CD8-positive, alpha-beta T cell (primary cell): ENCODE measurements at regions of chr6 and their contacts with region 1.

Region 1: GRCh38 chr6:37819177-37819823 is at the start of gene ZFAND3:
- DNase-seq: peak; percentile 83 to 97 (median 92)
- ATAC-seq: peak; percentile 81
- H3K4me3 ChIP-seq: peak within 1 kb of the TSS; percentile 73 to 92
- H3K4me3 Mint-ChIP-seq: peak within 1 kb of the TSS; percentile 96
- H3K27ac ChIP-seq: peak within 1 kb of the TSS; percentile 93 to 98
- H3K27ac Mint-ChIP-seq: peak within 1 kb of the TSS; percentile 98
- H3K4me1 ChIP-seq: peaks cover 39% of the 10 kb centered on the region
- H3K4me1 Mint-ChIP-seq: peaks cover 59% of the 10 kb centered on the region
- H3K27me3 ChIP-seq: no peaks in the 10 kb centered on the region
- H3K27me3 Mint-ChIP-seq: no peaks in the 10 kb centered on the region
- CTCF ChIP-seq: no peak
- total RNA-seq, gene ZFAND3: 28.4 to 29.9 TPM

Region 2: DNA sequence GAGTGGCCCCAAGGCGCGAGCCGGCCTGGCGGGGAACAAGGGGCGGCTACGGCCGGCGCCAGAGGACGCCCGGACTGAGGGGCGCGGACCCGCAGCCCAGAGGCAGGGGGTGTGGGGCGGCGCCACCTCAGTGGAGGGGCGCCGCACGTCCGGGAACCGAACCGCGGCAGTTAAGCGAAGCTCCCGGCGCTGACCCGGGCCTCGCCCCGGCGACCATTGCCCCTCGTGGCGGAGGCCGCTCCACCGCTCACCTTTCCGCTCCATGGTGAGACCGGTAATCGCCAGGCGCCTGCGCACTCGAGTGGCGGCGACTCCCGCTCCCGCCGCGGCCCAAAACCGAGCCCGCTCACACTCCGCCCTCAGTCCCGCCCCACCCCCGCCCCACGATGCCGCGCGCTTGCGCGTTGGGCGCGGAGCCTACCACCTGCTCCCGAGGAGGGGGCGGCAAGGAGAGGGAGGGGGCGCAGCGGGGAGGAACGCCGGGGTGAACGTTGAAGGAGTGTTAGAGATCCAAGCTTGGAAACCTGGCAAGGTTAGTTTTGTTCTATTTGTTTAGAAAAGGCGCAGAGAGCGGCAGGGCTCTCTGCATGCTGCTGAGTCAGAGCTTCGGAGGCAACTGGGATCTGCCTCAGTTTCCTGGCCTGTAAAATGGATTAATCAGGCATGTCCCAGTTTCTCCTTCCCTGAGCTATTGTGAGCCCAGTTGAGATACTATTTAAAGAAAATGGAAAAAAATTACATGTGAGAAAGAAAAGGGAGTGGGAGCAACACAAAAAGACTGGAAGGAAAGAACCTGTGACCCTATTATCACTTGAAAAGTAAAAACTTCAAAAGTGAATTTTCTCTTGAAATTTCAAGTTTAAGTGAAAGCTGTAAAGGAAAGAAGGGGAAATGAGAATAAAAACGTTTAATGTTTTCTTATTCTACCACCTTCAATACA is 1898.2 kb before region 1 on chr6 and contains the start of gene SRPK1:
- CTCF ChIA-PET with region 1: no interaction called
- POLR2A ChIA-PET with region 1: no interaction called
- intact Hi-C with region 1: loop called in 1 of 2 experiments (anchors 5 kb)
- DNase-seq: peak; percentile 66 to 90 (median 81)
- ATAC-seq: peak; percentile 76
- H3K4me3 ChIP-seq: peak within 1 kb of the TSS; percentile 63 to 67
- H3K4me3 Mint-ChIP-seq: peak within 1 kb of the TSS; percentile 96
- H3K27ac ChIP-seq: peak within 1 kb of the TSS; percentile 42 to 62
- H3K27ac Mint-ChIP-seq: peak within 1 kb of the TSS; percentile 93
- H3K4me1 ChIP-seq: peaks cover 19% of the 10 kb centered on the region
- H3K4me1 Mint-ChIP-seq: peaks cover 41% of the 10 kb centered on the region
- H3K27me3 ChIP-seq: no peaks in the 10 kb centered on the region
- H3K27me3 Mint-ChIP-seq: no peaks in the 10 kb centered on the region
- CTCF ChIP-seq: no peak
- total RNA-seq, gene SRPK1: 21.0 to 22.7 TPM

Region 3: DNA sequence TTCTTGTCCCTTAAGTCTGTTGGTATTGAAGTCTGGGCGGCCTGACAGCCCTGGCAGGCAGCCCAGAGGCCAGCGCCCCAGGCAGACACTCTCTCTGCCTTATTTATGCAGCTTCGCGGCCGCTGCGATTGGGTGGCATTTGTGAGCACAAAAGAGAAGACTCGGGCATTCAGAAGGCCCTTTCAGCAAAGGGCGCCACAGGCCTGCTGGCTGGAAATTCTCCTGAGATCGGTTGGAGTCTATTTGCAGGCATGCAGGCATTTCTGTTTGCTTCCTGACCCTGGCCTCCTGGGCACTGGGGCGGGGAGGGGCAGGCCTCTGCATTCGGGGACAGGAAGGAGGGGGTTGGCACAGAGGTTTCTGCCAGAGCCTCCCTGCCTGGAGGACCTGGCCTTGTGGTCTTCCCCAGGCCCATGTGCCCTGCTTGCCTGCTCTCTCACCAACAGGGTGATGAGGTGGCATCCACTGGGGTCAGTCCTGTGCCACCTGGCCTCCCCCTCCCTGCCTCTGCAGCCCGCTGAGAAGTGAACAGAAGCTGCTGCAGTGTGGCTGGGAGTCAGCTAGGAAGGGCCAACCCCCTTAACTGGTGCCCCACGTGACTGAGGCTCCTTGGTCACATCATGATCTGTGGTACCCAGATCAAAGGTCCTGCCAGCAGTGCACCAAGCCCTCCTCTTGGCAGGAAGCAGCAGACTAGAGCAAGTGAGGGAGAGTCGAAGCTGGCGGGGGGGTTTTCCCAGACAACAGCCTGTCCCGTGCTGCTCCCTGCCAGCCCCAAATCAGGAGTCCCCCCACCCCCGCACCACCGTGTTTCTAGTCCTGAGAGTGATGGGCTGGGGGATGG is 303.0 kb before region 1 on chr6:
- CTCF ChIA-PET with region 1: no interaction called
- POLR2A ChIA-PET with region 1: interaction called, 6 read pairs
- intact Hi-C with region 1: loop called in 1 of 2 experiments (anchors 5 kb)
- DNase-seq: peak; percentile 76 to 99 (median 90)
- ATAC-seq: peak; percentile 80
- H3K4me3 ChIP-seq: peak overlapping the region; percentile 35 to 52
- H3K4me3 Mint-ChIP-seq: peak overlapping the region; percentile 88
- H3K27ac ChIP-seq: peak overlapping the region; percentile 80 to 94
- H3K27ac Mint-ChIP-seq: peak overlapping the region; percentile 99
- H3K4me1 ChIP-seq: peaks cover 85% of the 10 kb centered on the region
- H3K4me1 Mint-ChIP-seq: peaks cover 80% of the 10 kb centered on the region
- H3K27me3 ChIP-seq: no peaks in the 10 kb centered on the region
- H3K27me3 Mint-ChIP-seq: no peaks in the 10 kb centered on the region
- CTCF ChIP-seq: no peak

Region 4: GRCh38 chr6:37830225-37830624 is 10.9 kb after region 1 on chr6:
- CTCF ChIA-PET with region 1: interaction called, 3 read pairs
- POLR2A ChIA-PET with region 1: interaction called, 10 read pairs
- intact Hi-C with region 1: loop called in 1 of 2 experiments (anchors 1 kb)
- DNase-seq: no peak
- ATAC-seq: no peak
- H3K4me3 ChIP-seq: no peak overlapping the region
- H3K4me3 Mint-ChIP-seq: no peak overlapping the region
- H3K27ac ChIP-seq: no peak overlapping the region
- H3K27ac Mint-ChIP-seq: no peak overlapping the region
- H3K4me1 ChIP-seq: peaks cover 47% of the 10 kb centered on the region
- H3K4me1 Mint-ChIP-seq: peaks cover 68% of the 10 kb centered on the region
- H3K27me3 ChIP-seq: no peaks in the 10 kb centered on the region
- H3K27me3 Mint-ChIP-seq: no peaks in the 10 kb centered on the region
- CTCF ChIP-seq: no peak

Region 5: GRCh38 chr6:37860226-37860839 is 41.0 kb after region 1 on chr6:
- CTCF ChIA-PET with region 1: interaction called, 3 read pairs
- POLR2A ChIA-PET with region 1: interaction called, 5 read pairs
- intact Hi-C with region 1: loop called (anchors 5 kb)
- DNase-seq: peak in 4 of 9 experiments; percentile 29 to 62 (median 41)
- ATAC-seq: no peak
- H3K4me3 ChIP-seq: no peak overlapping the region
- H3K4me3 Mint-ChIP-seq: no peak overlapping the region
- H3K27ac ChIP-seq: no peak overlapping the region
- H3K27ac Mint-ChIP-seq: no peak overlapping the region
- H3K4me1 ChIP-seq: peaks cover 7% of the 10 kb centered on the region
- H3K4me1 Mint-ChIP-seq: peaks cover 74% of the 10 kb centered on the region
- H3K27me3 ChIP-seq: no peaks in the 10 kb centered on the region
- H3K27me3 Mint-ChIP-seq: no peaks in the 10 kb centered on the region
- CTCF ChIP-seq: peak; percentile 39

Region 6: GRCh38 chr6:38702558-38703397 is 883.5 kb after region 1 on chr6 and contains the start of gene GLO1:
- CTCF ChIA-PET with region 1: no interaction called
- POLR2A ChIA-PET with region 1: no interaction called
- intact Hi-C with region 1: loop called (anchors 1 to 5 kb)
- DNase-seq: peak; percentile 91 to 98 (median 96)
- ATAC-seq: peak; percentile 99
- H3K4me3 ChIP-seq: peak within 1 kb of the TSS; percentile 64 to 88
- H3K4me3 Mint-ChIP-seq: peak within 1 kb of the TSS; percentile 83
- H3K27ac ChIP-seq: peak within 1 kb of the TSS; percentile 78 to 90
- H3K27ac Mint-ChIP-seq: peak within 1 kb of the TSS; percentile 92
- H3K4me1 ChIP-seq: no peaks in the 10 kb centered on the region
- H3K4me1 Mint-ChIP-seq: peaks cover 24% of the 10 kb centered on the region
- H3K27me3 ChIP-seq: no peaks in the 10 kb centered on the region
- H3K27me3 Mint-ChIP-seq: peaks cover 6% of the 10 kb centered on the region
- CTCF ChIP-seq: no peak
- total RNA-seq, gene GLO1: 23.1 to 23.9 TPM